B cell (primary cell): ENCODE measurements at regions of chr18 and their contacts with region 1.

Region 1: GRCh38 chr18:5879479-5879882 is 15.8 kb downstream of the TMEM200C start:
- DNase-seq: peak; percentile 14
- ATAC-seq: no peak
- H3K4me3 ChIP-seq: no peak overlapping the region
- H3K4me3 Mint-ChIP-seq: no peak overlapping the region
- H3K27ac ChIP-seq: no peak overlapping the region
- H3K27ac Mint-ChIP-seq: no peak overlapping the region
- H3K4me1 ChIP-seq: no peaks in the 10 kb centered on the region
- H3K4me1 Mint-ChIP-seq: no peaks in the 10 kb centered on the region
- H3K27me3 ChIP-seq: no peaks in the 10 kb centered on the region
- H3K27me3 Mint-ChIP-seq: peaks cover 20% of the 10 kb centered on the region
- CTCF ChIP-seq: peak; percentile 80

Region 2: DNA sequence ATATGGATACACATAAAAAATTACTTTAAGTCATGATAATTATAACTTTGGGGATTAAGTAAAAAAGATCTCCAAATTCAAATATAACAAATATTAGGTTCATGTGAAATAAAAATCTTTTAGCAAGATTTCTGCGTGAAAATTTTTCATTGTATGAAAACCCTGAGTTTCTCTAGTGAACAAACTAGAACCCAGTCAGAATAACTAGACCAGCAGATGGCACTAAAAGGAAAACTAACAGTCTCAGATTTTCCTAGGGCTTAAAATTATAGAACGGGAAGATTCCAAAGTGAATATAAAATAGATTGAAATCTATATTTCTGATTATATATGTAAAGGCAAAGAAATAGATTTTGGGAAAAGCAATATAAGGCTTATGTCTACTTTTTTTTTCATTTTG is 27.5 kb before region 1 on chr18:
- CTCF ChIA-PET with region 1: no interaction called
- POLR2A ChIA-PET with region 1: no interaction called
- intact Hi-C with region 1: no loop called
- DNase-seq: no peak
- ATAC-seq: no peak
- H3K4me3 ChIP-seq: no peak overlapping the region
- H3K4me3 Mint-ChIP-seq: no peak overlapping the region
- H3K27ac ChIP-seq: no peak overlapping the region
- H3K27ac Mint-ChIP-seq: no peak overlapping the region
- H3K4me1 ChIP-seq: no peaks in the 10 kb centered on the region
- H3K4me1 Mint-ChIP-seq: no peaks in the 10 kb centered on the region
- H3K27me3 ChIP-seq: no peaks in the 10 kb centered on the region
- H3K27me3 Mint-ChIP-seq: peaks cover 9% of the 10 kb centered on the region
- CTCF ChIP-seq: no peak

Region 3: DNA sequence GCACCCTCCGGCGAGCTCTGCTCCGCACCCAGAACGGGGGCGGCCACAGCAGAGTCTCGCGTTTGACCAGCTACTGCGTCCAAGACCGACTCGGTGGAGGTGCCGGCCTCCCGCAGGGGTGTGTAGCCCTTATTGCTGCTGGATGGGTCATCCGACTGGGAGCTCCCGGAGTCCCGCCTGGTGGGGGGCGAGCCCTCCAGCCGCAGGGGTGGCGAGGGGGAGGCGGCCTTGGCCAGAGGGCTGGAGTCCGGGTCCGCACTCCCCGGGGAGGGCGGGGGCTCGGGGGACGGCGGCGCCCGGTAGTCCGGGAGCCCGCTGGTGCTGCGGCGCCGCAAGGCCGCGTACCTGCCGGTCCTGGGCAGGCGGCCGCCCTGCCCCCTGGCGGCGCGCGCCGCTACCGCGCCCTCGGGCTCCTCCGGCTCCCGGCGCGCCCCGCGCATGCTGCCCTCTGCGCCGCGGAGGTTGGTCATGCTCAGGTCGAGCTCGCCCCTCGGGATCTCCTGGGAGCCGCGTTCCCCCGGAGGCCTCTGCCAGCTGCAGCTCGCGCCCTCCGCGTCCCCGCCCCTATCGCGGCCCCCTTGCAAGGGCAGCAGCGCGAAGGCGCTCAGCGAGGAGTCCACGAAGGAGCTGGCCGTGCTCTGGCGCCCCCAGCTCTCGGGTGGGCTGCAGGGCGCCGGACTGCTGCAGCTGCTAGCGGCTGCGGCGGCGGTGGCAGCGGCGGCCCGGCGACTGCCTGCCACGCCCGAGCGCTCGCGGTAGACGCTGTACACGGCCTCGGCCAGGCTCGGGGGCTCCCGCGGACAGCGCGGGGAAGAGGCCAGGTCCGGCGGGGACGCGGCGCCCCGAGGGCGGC is 11.1 kb after region 1 on chr18:
- CTCF ChIA-PET with region 1: interaction called, 13 read pairs
- POLR2A ChIA-PET with region 1: no interaction called
- intact Hi-C with region 1: no loop called
- DNase-seq: peak; percentile 54
- ATAC-seq: peak; percentile 64
- H3K4me3 ChIP-seq: peak overlapping the region in 3 of 5 experiments; percentile 17 to 41 (median 18)
- H3K4me3 Mint-ChIP-seq: no peak overlapping the region
- H3K27ac ChIP-seq: no peak overlapping the region
- H3K27ac Mint-ChIP-seq: no peak overlapping the region
- H3K4me1 ChIP-seq: peaks cover 3 to 17% of the 10 kb centered on the region in 2 donors
- H3K4me1 Mint-ChIP-seq: peaks cover 14% of the 10 kb centered on the region
- H3K27me3 ChIP-seq: peaks cover 0 to 47% (median 33%) of the 10 kb centered on the region in 4 experiments
- H3K27me3 Mint-ChIP-seq: peaks cover 54% of the 10 kb centered on the region
- CTCF ChIP-seq: peak; percentile 57

Region 4: GRCh38 chr18:6482198-6482977 is 602.9 kb after region 1 on chr18:
- CTCF ChIA-PET with region 1: interaction called, 10 read pairs
- POLR2A ChIA-PET with region 1: no interaction called
- intact Hi-C with region 1: no loop called
- DNase-seq: peak; percentile 35
- ATAC-seq: no peak
- H3K4me3 ChIP-seq: no peak overlapping the region
- H3K4me3 Mint-ChIP-seq: no peak overlapping the region
- H3K27ac ChIP-seq: no peak overlapping the region
- H3K27ac Mint-ChIP-seq: no peak overlapping the region
- H3K4me1 ChIP-seq: no peaks in the 10 kb centered on the region
- H3K4me1 Mint-ChIP-seq: peaks cover 1% of the 10 kb centered on the region
- H3K27me3 ChIP-seq: peaks cover 0 to 5% (median 0%) of the 10 kb centered on the region in 4 experiments
- H3K27me3 Mint-ChIP-seq: peaks cover 9% of the 10 kb centered on the region
- CTCF ChIP-seq: peak; percentile 60

Region 5: GRCh38 chr18:6521795-6522418 is 642.4 kb after region 1 on chr18:
- CTCF ChIA-PET with region 1: interaction called, 16 read pairs
- POLR2A ChIA-PET with region 1: no interaction called
- intact Hi-C with region 1: no loop called
- DNase-seq: peak; percentile 35
- ATAC-seq: no peak
- H3K4me3 ChIP-seq: no peak overlapping the region
- H3K4me3 Mint-ChIP-seq: no peak overlapping the region
- H3K27ac ChIP-seq: no peak overlapping the region
- H3K27ac Mint-ChIP-seq: no peak overlapping the region
- H3K4me1 ChIP-seq: no peaks in the 10 kb centered on the region
- H3K4me1 Mint-ChIP-seq: no peaks in the 10 kb centered on the region
- H3K27me3 ChIP-seq: no peaks in the 10 kb centered on the region
- H3K27me3 Mint-ChIP-seq: peaks cover 4% of the 10 kb centered on the region
- CTCF ChIP-seq: peak; percentile 69